GM12878 (cell line): ENCODE measurements at regions of chr12 and their contacts with region 1.

Region 1: GRCh38 chr12:76037130-76038103 is 5.8 kb upstream of the PHLDA1 start:
- DNase-seq: peak; percentile 34
- ATAC-seq: peak; percentile 68
- H3K4me3 ChIP-seq: no peak overlapping the region
- H3K27ac ChIP-seq: no peak overlapping the region
- H3K4me1 ChIP-seq: peaks cover 5% of the 10 kb centered on the region
- H3K27me3 ChIP-seq: no peaks in the 10 kb centered on the region
- CTCF ChIP-seq: peak; percentile 74 to 84 (median 81)
- EP300 ChIP-seq: no peak
- POLR2A ChIP-seq: no peak
- RAD21 ChIP-seq: peak; percentile 96

Region 2: DNA sequence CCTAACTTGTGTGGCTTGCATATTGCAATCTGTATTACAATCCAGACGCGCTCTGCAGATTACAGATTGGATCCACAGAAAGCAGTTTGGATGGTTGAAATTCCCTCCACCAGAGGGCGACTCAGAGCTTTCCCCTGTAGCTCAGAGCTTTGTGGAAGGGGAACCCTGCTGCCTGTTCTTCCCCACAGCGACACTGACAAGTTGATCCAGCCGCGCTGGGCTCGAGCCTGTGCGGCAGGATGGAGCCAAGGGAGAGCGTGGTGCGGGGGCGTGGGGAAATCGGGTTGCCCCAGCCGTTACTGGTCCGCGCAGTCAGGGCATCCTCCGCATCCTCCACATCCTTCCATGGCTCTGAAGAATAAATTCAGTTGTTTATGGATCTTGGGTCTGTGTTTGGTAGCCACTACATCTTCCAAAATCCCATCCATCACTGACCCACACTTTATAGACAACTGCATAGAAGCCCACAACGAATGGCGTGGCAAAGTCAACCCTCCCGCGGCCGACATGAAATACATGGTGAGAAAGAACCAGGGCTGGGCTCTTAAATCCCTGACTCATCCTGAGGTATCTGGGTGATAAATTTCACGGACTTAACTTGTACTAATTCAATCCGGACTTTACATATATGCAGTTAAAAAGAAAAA is 702.9 kb before region 1 on chr12 and contains the start of gene GLIPR1L1:
- CTCF ChIA-PET with region 1: no interaction called
- POLR2A ChIA-PET with region 1: no interaction called
- RAD21 ChIA-PET with region 1: interaction called, 5 read pairs
- SMC1A ChIA-PET with region 1: interaction called, 3 read pairs
- in situ Hi-C with region 1: loop called (anchors 5 kb)
- intact Hi-C with region 1: loop called (anchors 1 kb)
- DNase-seq: peak; percentile 44
- ATAC-seq: peak; percentile 83
- H3K4me3 ChIP-seq: peak within 1 kb of the TSS; percentile 57; the same call in 1 of the 2 replicates
- H3K27ac ChIP-seq: no peak within 1 kb of the TSS
- H3K4me1 ChIP-seq: peaks cover 4% of the 10 kb centered on the region
- H3K27me3 ChIP-seq: no peaks in the 10 kb centered on the region
- CTCF ChIP-seq: peak; percentile 83 to 90 (median 89)
- EP300 ChIP-seq: no peak
- POLR2A ChIP-seq: no peak
- RAD21 ChIP-seq: peak; percentile 87
- polyA plus RNA-seq, gene GLIPR1L1: 0.10 to 0.13 TPM

Region 3: GRCh38 chr12:75505706-75506312 is 531.6 kb before region 1 on chr12:
- CTCF ChIA-PET with region 1: interaction called, 13 read pairs
- POLR2A ChIA-PET with region 1: interaction called, 3 read pairs
- RAD21 ChIA-PET with region 1: interaction called, 20 read pairs
- SMC1A ChIA-PET with region 1: interaction called, 9 read pairs
- in situ Hi-C with region 1: no loop called
- intact Hi-C with region 1: loop called (anchors 5 kb)
- DNase-seq: no peak
- ATAC-seq: peak; percentile 50
- H3K4me3 ChIP-seq: no peak overlapping the region
- H3K27ac ChIP-seq: no peak overlapping the region
- H3K4me1 ChIP-seq: no peaks in the 10 kb centered on the region; the same call in 1 of the 2 replicates
- H3K27me3 ChIP-seq: no peaks in the 10 kb centered on the region
- CTCF ChIP-seq: peak; percentile 55 to 69 (median 63); a peak in 5 of 6 replicates
- EP300 ChIP-seq: no peak
- POLR2A ChIP-seq: no peak
- RAD21 ChIP-seq: peak; percentile 56

Region 4: GRCh38 chr12:75641031-75641780 is 396.2 kb before region 1 on chr12:
- CTCF ChIA-PET with region 1: interaction called, 35 read pairs
- POLR2A ChIA-PET with region 1: interaction called, 30 read pairs
- RAD21 ChIA-PET with region 1: interaction called, 94 read pairs
- SMC1A ChIA-PET with region 1: interaction called, 100 read pairs
- in situ Hi-C with region 1: no loop called
- intact Hi-C with region 1: no loop called
- DNase-seq: peak; percentile 87
- ATAC-seq: peak; percentile 96
- H3K4me3 ChIP-seq: no peak overlapping the region
- H3K27ac ChIP-seq: peak overlapping the region; percentile 76
- H3K4me1 ChIP-seq: peaks cover 22% of the 10 kb centered on the region
- H3K27me3 ChIP-seq: no peaks in the 10 kb centered on the region
- CTCF ChIP-seq: no peak
- EP300 ChIP-seq: peak; percentile 91 to 92
- POLR2A ChIP-seq: no peak
- RAD21 ChIP-seq: peak; percentile 40; the same call in 1 of the 2 replicates

Region 5: DNA sequence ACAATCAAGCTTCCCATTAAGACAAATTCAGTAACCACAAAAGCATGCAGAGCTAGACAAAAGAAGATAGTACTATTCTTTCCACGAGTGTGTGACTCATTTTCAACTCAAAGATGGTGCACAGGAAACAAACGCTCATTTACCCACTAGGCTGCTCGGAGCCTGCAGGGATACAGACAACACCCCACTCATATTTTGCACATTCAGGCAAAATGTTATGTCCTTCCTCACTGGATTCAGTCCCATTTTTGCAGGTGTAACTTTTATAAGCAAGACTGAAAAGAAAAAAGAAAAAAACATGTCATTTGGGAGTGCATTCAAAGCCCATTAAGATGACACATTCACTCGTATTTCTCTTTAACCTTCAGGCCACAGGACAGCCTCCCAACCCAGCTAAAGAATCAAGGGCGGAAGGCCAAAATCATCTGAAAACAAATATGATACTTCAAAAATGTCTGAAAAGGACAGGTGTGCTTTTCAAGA is 378.5 kb before region 1 on chr12:
- CTCF ChIA-PET with region 1: no interaction called
- POLR2A ChIA-PET with region 1: no interaction called
- RAD21 ChIA-PET with region 1: no interaction called
- SMC1A ChIA-PET with region 1: no interaction called
- in situ Hi-C with region 1: no loop called
- intact Hi-C with region 1: no loop called
- DNase-seq: no peak
- ATAC-seq: 0 out of 3 replicates have a peak, but pooled peaks have one; percentile 25
- H3K4me3 ChIP-seq: no peak overlapping the region
- H3K27ac ChIP-seq: no peak overlapping the region
- H3K4me1 ChIP-seq: peaks cover 6% of the 10 kb centered on the region; the same call in 1 of the 2 replicates
- H3K27me3 ChIP-seq: no peaks in the 10 kb centered on the region
- CTCF ChIP-seq: no peak
- EP300 ChIP-seq: no peak
- POLR2A ChIP-seq: no peak
- RAD21 ChIP-seq: no peak

Region 6: DNA sequence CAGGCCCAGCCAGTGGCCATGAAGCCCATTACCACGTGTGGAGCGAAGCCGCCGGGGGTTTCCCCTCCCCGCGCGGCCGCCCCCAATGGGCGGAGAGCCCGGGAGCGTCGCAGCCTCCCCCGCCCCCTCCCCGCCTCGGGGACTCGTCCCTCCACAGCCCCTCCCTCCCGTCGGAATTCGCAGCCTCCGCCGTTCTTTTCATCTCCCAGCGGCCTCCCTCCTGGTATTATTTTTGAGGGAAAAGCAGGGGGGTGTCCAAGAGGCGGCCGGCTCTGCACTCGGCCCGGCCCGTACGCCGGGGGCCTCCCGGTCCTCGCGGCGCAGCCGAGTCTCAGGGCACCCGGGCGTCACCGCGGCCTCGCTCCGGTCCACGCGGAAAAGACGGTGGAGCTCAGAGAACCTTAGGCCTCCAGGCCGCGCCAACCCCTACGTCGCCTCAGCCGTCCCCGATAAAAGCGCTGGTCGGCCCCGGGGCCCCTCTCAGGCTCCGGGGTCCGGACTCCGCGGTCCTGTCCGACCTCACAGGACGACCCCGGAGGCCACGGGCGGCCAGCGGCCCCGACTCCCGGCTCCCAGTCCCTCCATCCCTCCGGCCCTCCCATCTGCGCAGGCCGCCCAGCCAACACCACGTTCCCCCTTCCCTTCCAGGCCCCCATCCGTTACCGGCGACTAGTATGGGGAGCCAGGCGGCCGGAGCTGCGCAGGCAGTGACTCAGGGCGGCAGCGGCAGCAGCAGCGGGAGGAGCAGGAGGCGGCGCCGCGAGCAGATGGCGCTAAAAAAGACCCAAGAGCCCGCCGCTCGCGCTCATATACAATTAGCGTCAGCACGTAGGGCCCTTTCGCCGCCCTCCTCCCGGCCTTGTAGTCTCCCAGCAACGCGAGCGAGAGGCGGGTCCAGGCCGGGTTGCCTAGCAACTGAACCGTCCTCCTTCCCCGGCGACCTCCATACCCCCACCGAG is 46.8 kb after region 1 on chr12 and contains the start of gene NAP1L1:
- CTCF ChIA-PET with region 1: interaction called, 7 read pairs
- POLR2A ChIA-PET with region 1: interaction called, 11 read pairs
- RAD21 ChIA-PET with region 1: interaction called, 4 read pairs
- SMC1A ChIA-PET with region 1: interaction called, 11 read pairs
- in situ Hi-C with region 1: no loop called
- intact Hi-C with region 1: no loop called
- DNase-seq: peak; percentile 79
- ATAC-seq: peak; percentile 89
- H3K4me3 ChIP-seq: peak within 1 kb of the TSS; percentile 74
- H3K27ac ChIP-seq: peak within 1 kb of the TSS; percentile 91
- H3K4me1 ChIP-seq: peaks cover 11% of the 10 kb centered on the region
- H3K27me3 ChIP-seq: no peaks in the 10 kb centered on the region; a peak in 1 of 4 replicates
- CTCF ChIP-seq: no peak
- EP300 ChIP-seq: no peak
- POLR2A ChIP-seq: peak; percentile 94
- RAD21 ChIP-seq: no peak
- polyA plus RNA-seq, gene NAP1L1: 380 to 655 TPM

Region 7: GRCh38 chr12:76247026-76247646 is 209.7 kb after region 1 on chr12:
- CTCF ChIA-PET with region 1: no interaction called
- POLR2A ChIA-PET with region 1: no interaction called
- RAD21 ChIA-PET with region 1: no interaction called
- SMC1A ChIA-PET with region 1: no interaction called
- in situ Hi-C with region 1: no loop called
- intact Hi-C with region 1: no loop called
- DNase-seq: no peak
- ATAC-seq: no peak
- H3K4me3 ChIP-seq: no peak overlapping the region
- H3K27ac ChIP-seq: no peak overlapping the region
- H3K4me1 ChIP-seq: no peaks in the 10 kb centered on the region
- H3K27me3 ChIP-seq: no peaks in the 10 kb centered on the region; a peak in 1 of 4 replicates
- CTCF ChIP-seq: no peak
- EP300 ChIP-seq: no peak
- POLR2A ChIP-seq: no peak
- RAD21 ChIP-seq: no peak

Region 8: DNA sequence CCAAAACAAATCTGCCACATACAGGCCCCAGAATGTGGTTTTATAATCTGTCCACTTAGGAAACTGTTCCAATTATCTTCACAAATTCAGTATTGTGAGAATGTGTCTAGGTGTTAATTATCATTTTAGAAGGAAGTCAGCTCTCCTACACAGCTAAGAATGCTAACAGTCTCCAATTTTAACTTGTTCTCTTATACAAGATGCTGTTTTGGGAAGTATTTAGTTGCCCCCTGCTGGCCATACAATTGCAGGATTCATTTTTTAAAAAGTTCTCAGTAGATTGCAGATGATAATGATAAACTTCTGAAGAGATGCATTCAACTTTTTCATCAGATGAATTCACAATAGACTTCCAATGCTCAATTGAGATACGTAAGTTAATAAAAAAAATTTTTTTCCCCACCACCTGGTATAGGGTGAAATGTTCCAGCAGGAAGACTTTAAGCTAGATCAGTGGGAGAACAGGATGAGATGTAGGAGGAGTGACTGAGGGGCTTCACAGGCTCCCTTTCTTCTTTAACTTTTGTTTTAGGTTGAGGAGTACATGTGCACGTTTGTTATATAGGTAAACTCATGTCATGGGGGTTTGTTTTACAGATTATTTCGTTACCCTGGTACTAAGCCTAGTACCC is 549.5 kb after region 1 on chr12:
- CTCF ChIA-PET with region 1: interaction called, 11 read pairs
- POLR2A ChIA-PET with region 1: no interaction called
- RAD21 ChIA-PET with region 1: interaction called, 5 read pairs
- SMC1A ChIA-PET with region 1: interaction called, 4 read pairs
- in situ Hi-C with region 1: no loop called
- intact Hi-C with region 1: no loop called
- DNase-seq: no peak
- ATAC-seq: peak; percentile 82
- H3K4me3 ChIP-seq: no peak overlapping the region
- H3K27ac ChIP-seq: no peak overlapping the region
- H3K4me1 ChIP-seq: no peaks in the 10 kb centered on the region
- H3K27me3 ChIP-seq: no peaks in the 10 kb centered on the region
- CTCF ChIP-seq: peak; percentile 54 to 69 (median 68); a peak in 5 of 6 replicates
- EP300 ChIP-seq: no peak
- POLR2A ChIP-seq: no peak
- RAD21 ChIP-seq: peak; percentile 85